Activated T-helper 1 cell treated with anti-CD3 and anti-CD28 coated beads, Interleukin-12 subunit alpha, Interleukin-12 subunit beta, Interleukin-2, Interleukin-4 antibody, amounts not matched to agents 30 ng/mL and 10 ng/mL and 1 ng/mL, durations not matched to agents 14 hours and 24 hours and 36 hours (primary cell): ENCODE measurements at regions of chr10 and their contacts with region 1.

Region 1: GRCh38 chr10:130160765-130161164 is 24.6 kb downstream of the GLRX3 start:
- DNase-seq: peak; percentile 6
- H3K4me3 Mint-ChIP-seq: no peak overlapping the region
- H3K27ac Mint-ChIP-seq: no peak overlapping the region
- H3K4me1 Mint-ChIP-seq: peaks cover 29% of the 10 kb centered on the region
- H3K27me3 Mint-ChIP-seq: no peaks in the 10 kb centered on the region

Region 2: DNA sequence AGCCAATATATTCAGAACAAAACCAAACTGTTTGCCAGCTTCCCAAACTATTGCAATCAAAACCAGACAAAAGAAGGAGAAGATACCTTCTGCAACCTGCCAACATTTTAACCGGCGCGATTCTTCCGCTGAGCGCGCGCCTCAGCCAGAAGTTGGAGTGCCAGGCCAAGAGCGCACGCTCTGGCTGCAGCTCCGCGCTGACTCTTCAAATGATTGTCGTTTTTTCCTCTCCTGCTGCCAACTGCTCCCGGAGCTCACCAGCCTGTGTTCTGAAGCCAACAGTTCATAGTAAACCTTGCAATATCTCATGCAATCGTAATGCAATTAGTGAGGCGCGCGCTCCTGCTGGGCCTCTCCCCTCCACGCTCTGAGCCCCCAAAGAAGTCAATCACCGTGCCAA is 953.5 kb before region 1 on chr10:
- intact Hi-C with region 1: no loop called
- DNase-seq: no peak
- H3K4me3 Mint-ChIP-seq: no peak overlapping the region
- H3K27ac Mint-ChIP-seq: no peak overlapping the region
- H3K4me1 Mint-ChIP-seq: no peaks in the 10 kb centered on the region
- H3K27me3 Mint-ChIP-seq: peaks cover 3% of the 10 kb centered on the region

Region 3: GRCh38 chr10:130013335-130014262 is 147.2 kb before region 1 on chr10:
- intact Hi-C with region 1: no loop called
- DNase-seq: no peak
- H3K4me3 Mint-ChIP-seq: no peak overlapping the region
- H3K27ac Mint-ChIP-seq: no peak overlapping the region
- H3K4me1 Mint-ChIP-seq: no peaks in the 10 kb centered on the region
- H3K27me3 Mint-ChIP-seq: no peaks in the 10 kb centered on the region

Region 4: GRCh38 chr10:130074639-130075038 is 86.1 kb before region 1 on chr10:
- intact Hi-C with region 1: no loop called
- DNase-seq: no peak
- H3K4me3 Mint-ChIP-seq: no peak overlapping the region
- H3K27ac Mint-ChIP-seq: no peak overlapping the region
- H3K4me1 Mint-ChIP-seq: no peaks in the 10 kb centered on the region
- H3K27me3 Mint-ChIP-seq: no peaks in the 10 kb centered on the region

Region 5: DNA sequence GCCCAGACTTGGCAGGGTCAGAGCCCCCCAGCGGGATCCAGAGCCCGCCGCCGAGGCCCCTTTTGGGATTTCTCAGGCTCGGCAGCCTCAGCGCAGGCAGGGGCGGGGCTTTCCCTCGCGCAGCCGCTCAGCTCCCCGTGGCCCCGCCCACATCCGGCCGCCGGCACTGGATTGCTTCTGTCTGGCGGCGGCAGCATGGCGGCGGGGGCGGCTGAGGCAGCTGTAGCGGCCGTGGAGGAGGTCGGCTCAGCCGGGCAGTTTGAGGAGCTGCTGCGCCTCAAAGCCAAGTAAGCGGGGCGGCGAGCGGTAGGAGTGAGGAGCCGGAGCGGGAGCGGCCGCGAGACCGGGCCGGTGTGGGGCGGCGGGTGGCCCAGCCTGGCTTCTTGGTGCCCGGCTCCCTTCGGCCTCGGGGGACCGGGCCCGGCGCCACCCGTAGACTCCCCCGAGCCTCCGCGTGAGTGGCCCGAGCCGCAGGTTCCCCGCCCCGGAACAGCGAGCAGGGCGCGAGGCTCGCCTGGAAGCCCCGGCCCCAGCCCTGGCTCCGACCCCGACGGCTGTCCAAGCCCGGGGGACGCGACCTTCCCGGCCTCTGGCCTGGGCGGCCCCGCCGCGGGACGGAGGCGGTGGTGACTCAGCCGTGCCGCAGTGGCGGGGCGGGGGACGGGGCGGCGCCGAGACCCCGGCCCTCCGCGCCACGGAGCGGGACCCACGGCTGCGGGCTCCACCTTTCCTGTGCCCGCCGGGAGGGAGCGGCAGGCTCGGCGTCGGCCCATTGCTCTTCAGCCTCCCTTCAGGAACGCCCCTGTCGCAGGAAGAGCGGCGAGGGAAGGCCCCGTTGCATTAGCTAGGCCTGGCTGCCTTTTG is 24.3 kb before region 1 on chr10 and contains the start of gene GLRX3:
- intact Hi-C with region 1: loop called (anchors 2 kb)
- DNase-seq: peak; percentile 85
- H3K4me3 Mint-ChIP-seq: peak within 1 kb of the TSS; percentile 90
- H3K27ac Mint-ChIP-seq: peak within 1 kb of the TSS; percentile 84
- H3K4me1 Mint-ChIP-seq: peaks cover 53% of the 10 kb centered on the region
- H3K27me3 Mint-ChIP-seq: peaks cover 13% of the 10 kb centered on the region
- total RNA-seq, gene GLRX3: 119 and 129 TPM in 2 replicates